ENCODE measurements at regions of chr7 and their contacts with region 1.

Region 1: DNA sequence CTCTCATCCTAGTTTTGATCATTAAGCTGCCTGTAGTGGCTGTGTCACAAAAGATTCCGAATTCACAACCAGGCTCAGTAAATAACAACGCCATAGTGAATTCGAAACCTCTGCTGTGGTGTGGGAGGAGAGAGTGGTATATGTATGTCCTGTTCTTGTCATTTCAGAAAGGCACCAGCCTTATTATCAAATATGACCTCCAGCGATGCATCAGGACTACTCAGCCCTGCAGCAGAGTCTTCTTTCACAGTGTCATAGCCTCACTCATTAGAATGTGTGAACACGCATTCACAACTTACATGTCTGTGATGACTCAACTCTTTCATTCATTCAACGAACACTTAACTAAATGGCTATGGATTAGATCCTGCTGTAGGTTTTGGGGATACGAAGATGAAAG is 15.3 kb downstream of the AOC1 start:
- DNase-seq: no peak
- H3K4me3 Mint-ChIP-seq: no peak overlapping the region
- H3K27ac Mint-ChIP-seq: no peak overlapping the region
- H3K4me1 Mint-ChIP-seq: no peaks in the 10 kb centered on the region
- H3K27me3 Mint-ChIP-seq: peaks cover 36% of the 10 kb centered on the region

Region 2: GRCh38 chr7:150830937-150831336 is 36.7 kb before region 1 on chr7:
- CTCF ChIA-PET with region 1: no interaction called
- POLR2A ChIA-PET with region 1: no interaction called
- DNase-seq: no peak
- H3K4me3 Mint-ChIP-seq: no peak overlapping the region
- H3K27ac Mint-ChIP-seq: no peak overlapping the region
- H3K4me1 Mint-ChIP-seq: no peaks in the 10 kb centered on the region
- H3K27me3 Mint-ChIP-seq: peaks cover 47% of the 10 kb centered on the region

Region 3: DNA sequence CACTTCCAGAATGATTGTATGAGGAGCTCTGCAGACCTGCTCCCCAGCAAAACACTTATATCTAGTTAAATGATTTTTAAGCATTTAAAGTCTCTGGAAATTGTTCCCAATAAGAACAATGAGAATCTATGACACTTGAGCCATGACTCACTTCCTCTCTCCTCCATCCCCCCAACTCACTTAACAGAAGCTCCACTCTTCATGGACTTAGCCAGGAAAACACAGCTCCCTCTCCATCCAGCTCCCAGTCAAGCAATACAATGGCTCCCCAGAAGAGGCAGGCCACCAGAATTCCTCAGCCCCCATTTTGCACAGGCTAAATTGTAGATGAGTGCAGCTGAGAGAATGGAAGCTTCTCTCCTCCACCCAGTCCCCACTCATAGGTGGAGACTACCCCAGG is 11.7 kb after region 1 on chr7:
- CTCF ChIA-PET with region 1: interaction called, 10 read pairs
- POLR2A ChIA-PET with region 1: no interaction called
- DNase-seq: no peak
- H3K4me3 Mint-ChIP-seq: no peak overlapping the region
- H3K27ac Mint-ChIP-seq: no peak overlapping the region
- H3K4me1 Mint-ChIP-seq: peaks cover 3% of the 10 kb centered on the region
- H3K27me3 Mint-ChIP-seq: peaks cover 67% of the 10 kb centered on the region

Region 4: GRCh38 chr7:150927956-150928344 is 60.3 kb after region 1 on chr7:
- CTCF ChIA-PET with region 1: no interaction called
- POLR2A ChIA-PET with region 1: no interaction called
- DNase-seq: no peak
- H3K4me3 Mint-ChIP-seq: no peak overlapping the region
- H3K27ac Mint-ChIP-seq: no peak overlapping the region
- H3K4me1 Mint-ChIP-seq: peaks cover 23% of the 10 kb centered on the region
- H3K27me3 Mint-ChIP-seq: peaks cover 29% of the 10 kb centered on the region